K562 (cell line): ENCODE measurements at regions of chr17 and their contacts with region 1.

Region 1: GRCh38 chr17:17313350-17313991 is 10.3 kb downstream of the NT5M start:
- DNase-seq: peak; percentile 30 to 65 (median 44)
- ATAC-seq: peak; percentile 90
- H3K4me3 ChIP-seq: no peak overlapping the region
- H3K27ac ChIP-seq: no peak overlapping the region
- H3K4me1 ChIP-seq: peaks cover 0 to 2% of the 10 kb centered on the region in 2 experiments; a peak in 1 of 5 replicates
- H3K27me3 ChIP-seq: no peaks in the 10 kb centered on the region
- CTCF ChIP-seq: peak; percentile 57 to 68 (median 62)
- EP300 ChIP-seq: no peak
- POLR2A ChIP-seq: no peak
- RAD21 ChIP-seq: peak; percentile 37 to 58

Region 2: DNA sequence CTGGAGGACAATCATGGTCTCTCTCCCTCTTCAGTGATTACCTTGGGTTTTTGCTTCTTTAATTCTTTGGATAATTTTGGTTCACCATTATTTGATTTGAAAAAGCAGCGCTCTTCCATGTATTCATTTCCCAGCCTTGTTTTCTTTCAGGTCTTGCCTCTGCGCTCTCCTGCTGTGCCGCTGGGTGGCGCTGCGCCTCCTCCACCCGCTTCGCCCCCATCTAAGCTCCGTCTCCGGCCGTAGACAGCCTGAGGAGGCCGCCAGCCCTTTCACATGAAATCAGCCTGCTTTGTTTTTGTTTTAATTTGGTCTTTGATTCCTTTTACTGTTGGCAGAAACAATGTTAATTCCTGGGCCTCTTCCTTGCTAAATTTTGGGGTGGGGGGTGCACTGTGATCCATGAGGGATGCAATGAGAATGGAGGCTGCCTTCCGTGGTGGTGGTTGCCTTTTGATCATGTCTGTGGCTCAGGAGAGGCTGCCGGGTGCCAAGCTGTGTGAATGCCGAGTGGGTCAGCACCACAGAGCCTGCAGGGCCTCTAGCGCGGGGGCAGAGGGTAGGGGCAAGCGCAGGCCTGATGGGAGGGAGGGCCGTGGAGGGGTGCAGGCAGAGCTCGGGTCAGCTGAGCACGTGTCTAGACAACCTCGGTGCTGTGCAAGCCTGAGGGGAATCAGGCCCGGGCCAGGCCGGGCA is 171.5 kb before region 1 on chr17:
- CTCF ChIA-PET with region 1: interaction called, 4 read pairs
- POLR2A ChIA-PET with region 1: no interaction called
- in situ Hi-C with region 1: no loop called
- intact Hi-C with region 1: loop called (anchors 10 kb)
- DNase-seq: peak; percentile 58 to 85 (median 79)
- ATAC-seq: peak; percentile 92
- H3K4me3 ChIP-seq: no peak overlapping the region
- H3K27ac ChIP-seq: no peak overlapping the region
- H3K4me1 ChIP-seq: peaks cover 0 to 7% of the 10 kb centered on the region in 2 experiments; a peak in 1 of 5 replicates
- H3K27me3 ChIP-seq: no peaks in the 10 kb centered on the region
- CTCF ChIP-seq: peak; percentile 80 to 90 (median 84)
- EP300 ChIP-seq: no peak
- POLR2A ChIP-seq: no peak
- RAD21 ChIP-seq: peak; percentile 33 to 67